Mammary epithelial cell (primary cell): ENCODE measurements at regions of chr6 and their contacts with region 1.

Region 1: GRCh38 chr6:158999666-159000403 is at the start of gene RSPH3:
- DNase-seq: peak; percentile 97
- H3K4me3 ChIP-seq: peak within 1 kb of the TSS; percentile 42 to 94 (median 65)
- H3K27ac ChIP-seq: peak within 1 kb of the TSS; percentile 69
- H3K4me1 ChIP-seq: peaks cover 19% of the 10 kb centered on the region
- H3K27me3 ChIP-seq: no peaks in the 10 kb centered on the region
- CTCF ChIP-seq: peak in 1 of 2 donors; percentile 37
- total RNA-seq, gene RSPH3: 12.2 to 15.6 TPM

Region 2: DNA sequence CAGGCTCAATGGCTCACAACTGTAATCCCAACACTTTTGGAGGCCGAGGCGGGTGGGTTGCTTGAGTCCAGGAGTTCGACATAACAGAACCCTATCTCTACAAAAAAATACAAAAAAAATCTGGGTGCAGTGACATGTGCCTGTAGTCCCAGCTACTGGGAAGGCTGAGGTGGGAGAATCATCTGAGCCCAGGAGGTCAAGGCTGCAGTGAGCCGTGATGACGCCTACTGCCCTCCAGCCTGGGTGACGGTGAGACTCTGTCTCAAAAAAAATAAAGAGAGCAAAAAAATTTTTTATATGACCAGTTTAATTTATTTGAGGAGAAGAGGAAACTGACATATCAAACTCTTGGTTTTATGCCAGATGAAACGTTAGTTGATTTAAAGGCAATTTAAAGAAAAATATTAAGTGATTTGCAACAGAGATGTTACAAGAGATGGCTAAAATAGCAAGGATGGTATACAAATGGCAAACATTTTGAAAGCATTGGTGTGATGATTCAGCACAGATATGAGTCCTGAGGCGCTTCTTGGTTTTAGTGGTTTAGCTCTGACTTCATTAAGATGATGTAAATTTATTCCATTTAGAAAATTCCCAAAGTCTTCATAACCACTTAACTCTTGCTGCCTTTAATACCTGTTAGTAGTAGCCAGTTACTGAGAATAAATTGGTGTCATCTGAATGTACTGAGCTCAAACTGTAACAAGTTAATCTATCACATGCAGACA is 813.9 kb before region 1 on chr6:
- CTCF ChIA-PET with region 1: no interaction called
- dilution Hi-C with region 1: no loop called
- in situ Hi-C with region 1: loop called in 1 of 2 experiments (anchors 25 kb)
- intact Hi-C with region 1: no loop called
- DNase-seq: peak; percentile 89
- H3K4me3 ChIP-seq: no peak overlapping the region
- H3K27ac ChIP-seq: no peak overlapping the region
- H3K4me1 ChIP-seq: peaks cover 15% of the 10 kb centered on the region
- H3K27me3 ChIP-seq: no peaks in the 10 kb centered on the region
- CTCF ChIP-seq: no peak